CD14-positive monocyte (primary cell): ENCODE measurements at regions of chr16 and their contacts with region 1.

Region 1: DNA sequence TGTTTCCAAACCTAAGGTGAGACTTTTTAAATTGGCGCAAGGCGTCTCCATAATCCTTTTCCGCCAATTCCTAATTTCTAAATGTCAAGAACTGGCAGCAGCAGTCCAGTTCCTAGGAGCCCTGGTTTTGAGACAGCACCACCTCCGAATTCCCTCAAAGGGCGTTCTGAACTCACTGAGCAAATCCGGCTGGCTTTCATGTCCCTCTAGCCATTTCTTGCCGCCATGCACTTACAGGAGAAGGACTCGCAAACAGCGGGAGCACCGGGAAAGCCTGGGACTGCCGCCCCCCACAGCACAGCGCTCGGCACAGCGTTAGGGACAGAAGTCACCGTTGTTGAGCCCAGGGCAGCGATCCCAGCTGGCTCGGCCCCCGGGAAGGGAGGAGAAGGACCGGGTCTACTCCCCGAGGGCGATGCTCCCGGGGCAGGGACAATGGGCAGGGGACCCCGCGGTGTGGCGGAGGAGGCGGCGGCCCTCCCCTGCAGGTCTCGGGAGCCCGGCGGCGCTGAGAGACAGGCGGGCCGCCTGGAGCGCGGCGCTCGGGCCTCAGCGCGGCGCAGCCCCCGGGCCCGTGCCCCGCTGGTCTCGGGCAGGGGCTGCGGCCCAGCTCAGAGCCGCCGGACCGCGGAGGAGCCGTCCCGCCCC is 545 bp downstream of the ARHGAP17 start:
- DNase-seq: peak in 1 of 3 donors; percentile 17
- H3K4me3 ChIP-seq: peak overlapping the region; percentile 80 to 97 (median 87)
- H3K4me3 Mint-ChIP-seq: peak overlapping the region; percentile 93 to 98
- H3K27ac ChIP-seq: peak overlapping the region; percentile 89 to 91
- H3K27ac Mint-ChIP-seq: peak overlapping the region; percentile 84 to 97 (median 96)
- H3K4me1 ChIP-seq: peaks cover 71 to 79% of the 10 kb centered on the region in 2 donors
- H3K4me1 Mint-ChIP-seq: peaks cover 80% of the 10 kb centered on the region
- H3K27me3 ChIP-seq: no peaks in the 10 kb centered on the region
- H3K27me3 Mint-ChIP-seq: no peaks in the 10 kb centered on the region
- CTCF ChIP-seq: no peak

Region 2: GRCh38 chr16:24986512-24987303 is 27.9 kb before region 1 on chr16:
- intact Hi-C with region 1: loop called in 1 of 2 experiments (anchors 2 kb)
- DNase-seq: peak in 2 of 3 donors; percentile 29 to 44
- H3K4me3 ChIP-seq: peak overlapping the region in 1 of 3 experiments; percentile 16
- H3K4me3 Mint-ChIP-seq: peak overlapping the region; percentile 9 to 27
- H3K27ac ChIP-seq: peak overlapping the region; percentile 50 to 70
- H3K27ac Mint-ChIP-seq: peak overlapping the region; percentile 68 to 91 (median 80)
- H3K4me1 ChIP-seq: peaks cover 54 to 61% of the 10 kb centered on the region in 2 donors
- H3K4me1 Mint-ChIP-seq: peaks cover 88% of the 10 kb centered on the region
- H3K27me3 ChIP-seq: no peaks in the 10 kb centered on the region
- H3K27me3 Mint-ChIP-seq: no peaks in the 10 kb centered on the region
- CTCF ChIP-seq: no peak

Region 3: GRCh38 chr16:24999856-25000461 is 14.7 kb before region 1 on chr16:
- intact Hi-C with region 1: no loop called
- DNase-seq: no peak
- H3K4me3 ChIP-seq: no peak overlapping the region
- H3K4me3 Mint-ChIP-seq: no peak overlapping the region
- H3K27ac ChIP-seq: peak overlapping the region in 1 of 2 donors; percentile 27
- H3K27ac Mint-ChIP-seq: peak overlapping the region in 2 of 7 donors; percentile 23 to 52
- H3K4me1 ChIP-seq: peaks cover 30 to 35% of the 10 kb centered on the region in 2 donors
- H3K4me1 Mint-ChIP-seq: peaks cover 56% of the 10 kb centered on the region
- H3K27me3 ChIP-seq: no peaks in the 10 kb centered on the region
- H3K27me3 Mint-ChIP-seq: peaks cover 0 to 4% (median 2%) of the 10 kb centered on the region in 3 donors
- CTCF ChIP-seq: no peak

Region 4: DNA sequence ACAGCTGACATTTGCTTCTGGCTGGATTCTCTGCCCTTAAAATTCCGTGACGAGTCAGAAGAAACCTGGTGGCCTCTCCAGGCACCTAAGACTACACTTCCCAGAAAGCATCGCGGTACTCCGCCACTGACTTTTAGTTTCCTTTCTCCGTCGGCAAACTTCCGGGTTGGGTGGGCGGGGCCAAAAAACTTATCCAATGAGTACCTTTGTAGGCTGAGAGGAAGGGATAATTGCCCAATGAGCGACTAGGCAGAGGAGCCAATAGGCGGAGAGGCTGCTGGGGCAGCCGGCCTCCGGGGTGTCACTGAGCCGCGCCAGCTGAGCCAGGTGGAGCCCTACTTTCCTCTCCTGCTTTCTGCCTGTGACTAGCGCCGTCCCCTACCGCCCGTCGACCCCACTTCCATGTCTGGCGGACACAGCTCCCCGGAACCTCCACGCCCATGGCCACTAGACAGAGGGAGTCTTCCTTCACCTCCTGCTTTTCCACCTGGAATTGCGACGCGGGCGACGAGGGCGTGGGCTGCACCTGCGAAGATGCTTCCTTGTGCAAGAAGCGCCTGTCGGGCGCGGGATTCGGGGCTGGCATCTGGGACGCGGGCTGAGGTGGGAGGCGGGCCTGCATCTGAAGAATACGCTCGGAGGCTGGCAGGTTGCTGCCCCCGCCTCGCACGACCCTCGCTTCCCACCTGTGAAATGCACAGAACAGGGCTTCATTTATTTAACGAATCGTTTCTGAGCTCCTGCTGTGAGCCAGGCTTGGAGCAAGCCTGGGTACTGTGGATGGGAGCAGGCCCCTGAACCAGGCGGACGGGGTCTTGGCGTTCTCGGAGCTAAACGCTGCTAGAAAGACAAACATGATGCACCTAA is 17.1 kb after region 1 on chr16:
- intact Hi-C with region 1: loop called in 1 of 2 experiments (anchors 2 kb)
- DNase-seq: peak; percentile 93 to 97 (median 95)
- H3K4me3 ChIP-seq: peak overlapping the region; percentile 87 to 97 (median 90)
- H3K4me3 Mint-ChIP-seq: peak overlapping the region; percentile 91 to 95
- H3K27ac ChIP-seq: peak overlapping the region; percentile 3 to 86
- H3K27ac Mint-ChIP-seq: peak overlapping the region in 6 of 7 donors; percentile 71 to 96 (median 88)
- H3K4me1 ChIP-seq: peaks cover 20 to 25% of the 10 kb centered on the region in 2 donors
- H3K4me1 Mint-ChIP-seq: peaks cover 35% of the 10 kb centered on the region
- H3K27me3 ChIP-seq: no peaks in the 10 kb centered on the region
- H3K27me3 Mint-ChIP-seq: peaks cover 0 to 1% (median 0%) of the 10 kb centered on the region in 3 donors
- CTCF ChIP-seq: no peak

Region 5: GRCh38 chr16:25045696-25046381 is 31.2 kb after region 1 on chr16:
- intact Hi-C with region 1: loop called in 1 of 2 experiments (anchors 5 kb)
- DNase-seq: peak in 1 of 3 donors; percentile 12
- H3K4me3 ChIP-seq: no peak overlapping the region
- H3K4me3 Mint-ChIP-seq: no peak overlapping the region
- H3K27ac ChIP-seq: no peak overlapping the region
- H3K27ac Mint-ChIP-seq: peak overlapping the region in 3 of 7 donors; percentile 15 to 74 (median 47)
- H3K4me1 ChIP-seq: peaks cover 16 to 34% of the 10 kb centered on the region in 2 donors
- H3K4me1 Mint-ChIP-seq: peaks cover 34% of the 10 kb centered on the region
- H3K27me3 ChIP-seq: no peaks in the 10 kb centered on the region
- H3K27me3 Mint-ChIP-seq: peaks cover 0 to 1% (median 0%) of the 10 kb centered on the region in 3 donors
- CTCF ChIP-seq: no peak